SK-N-SH (cell line): ENCODE measurements at regions of chr17 and their contacts with region 1.

Region 1: DNA sequence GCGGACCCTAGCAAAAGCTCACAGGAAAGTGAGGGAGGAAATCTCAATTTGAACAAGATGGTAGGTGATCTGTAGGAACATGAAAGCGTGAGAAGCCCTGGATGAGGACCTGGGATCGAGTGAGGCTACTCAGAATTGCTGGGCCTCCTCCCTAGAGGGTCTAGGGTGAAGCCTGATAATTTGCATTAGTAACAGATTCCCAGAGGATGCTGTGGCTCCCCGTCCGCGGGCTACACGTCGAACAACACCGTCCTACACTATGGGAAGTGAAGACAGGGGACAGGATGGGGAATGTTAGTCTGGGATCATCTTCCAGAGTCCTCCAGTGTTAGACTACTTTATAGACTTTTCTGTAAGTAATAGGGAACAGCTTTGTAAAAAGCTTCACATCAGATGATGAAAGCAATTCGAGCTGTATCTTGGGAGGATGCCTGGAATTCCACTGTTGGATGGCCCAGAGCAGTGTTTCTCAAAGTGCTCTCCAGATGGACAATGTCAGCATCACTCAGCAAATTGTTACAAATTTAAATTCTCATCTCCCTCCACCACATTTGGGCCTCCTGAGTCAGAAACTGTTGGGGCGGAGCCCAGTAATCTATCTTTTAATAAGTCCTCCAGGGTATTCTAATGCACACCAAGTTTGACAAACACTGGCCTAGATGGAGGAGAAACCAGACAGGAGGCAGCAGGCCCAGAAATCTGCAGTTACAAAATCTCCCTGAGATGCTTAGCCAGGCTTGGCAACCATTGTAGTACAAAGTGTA is 6.5 kb downstream of the FNDC8 start:
- DNase-seq: no peak
- H3K4me3 ChIP-seq: no peak overlapping the region
- H3K27ac ChIP-seq: no peak overlapping the region
- H3K4me1 ChIP-seq: no peaks in the 10 kb centered on the region
- H3K27me3 ChIP-seq: no peaks in the 10 kb centered on the region
- CTCF ChIP-seq: no peak
- EP300 ChIP-seq: no peak
- RAD21 ChIP-seq: no peak

Region 2: DNA sequence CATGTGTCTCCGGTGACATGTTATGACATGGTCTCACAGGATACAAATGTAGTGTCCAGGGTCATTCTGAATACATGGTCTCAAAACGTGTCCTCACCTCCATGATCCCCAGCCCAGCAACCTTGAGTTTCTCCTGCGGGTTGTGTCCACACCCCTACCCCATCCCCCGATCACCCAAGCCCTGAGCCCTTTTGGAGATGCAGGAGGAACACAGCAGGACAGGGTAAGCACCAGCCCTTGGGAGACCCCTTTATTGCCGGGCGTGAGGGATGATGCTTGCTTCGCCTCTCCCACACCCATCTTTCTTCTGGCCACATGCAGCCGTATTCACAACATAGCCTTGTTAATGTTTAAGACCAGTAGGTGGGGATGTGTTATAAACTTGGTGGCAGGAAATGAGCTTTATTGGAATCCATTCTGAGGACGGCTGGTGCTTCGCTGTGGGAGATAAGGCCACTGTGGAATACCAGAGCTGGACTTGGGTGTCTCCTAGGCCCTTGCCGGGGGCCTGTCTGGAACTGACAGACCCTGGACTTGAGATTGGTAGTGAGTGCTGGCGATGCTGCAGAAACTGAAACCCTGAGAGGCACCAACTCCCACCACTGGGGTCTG is 543.0 kb before region 1 on chr17:
- CTCF ChIA-PET with region 1: no interaction called
- POLR2A ChIA-PET with region 1: no interaction called
- DNase-seq: peak; percentile 75
- H3K4me3 ChIP-seq: no peak overlapping the region
- H3K27ac ChIP-seq: no peak overlapping the region
- H3K4me1 ChIP-seq: peaks cover 0 to 8% of the 10 kb centered on the region in 2 experiments; a peak in 1 of 4 replicates
- H3K27me3 ChIP-seq: peaks cover 66% of the 10 kb centered on the region
- CTCF ChIP-seq: peak; percentile 22; the same call in 1 of the 2 replicates
- EP300 ChIP-seq: no peak
- RAD21 ChIP-seq: peak; percentile 83

Region 3: GRCh38 chr17:35141681-35142466 is 13.9 kb after region 1 on chr17 and contains the start of gene NLE1:
- CTCF ChIA-PET with region 1: interaction called, 11 read pairs
- POLR2A ChIA-PET with region 1: interaction called, 5 read pairs
- DNase-seq: peak; percentile 94
- H3K4me3 ChIP-seq: peak within 1 kb of the TSS; percentile 91 to 99
- H3K27ac ChIP-seq: peak within 1 kb of the TSS in 1 of 2 experiments; percentile 47; a peak in 1 of 4 replicates
- H3K4me1 ChIP-seq: peaks cover 0 to 3% of the 10 kb centered on the region in 2 experiments; a peak in 1 of 4 replicates
- H3K27me3 ChIP-seq: no peaks in the 10 kb centered on the region; the same call in 1 of the 2 replicates
- CTCF ChIP-seq: peak; percentile 83
- EP300 ChIP-seq: peak; percentile 14 to 24; a peak in 1 of 4 replicates
- RAD21 ChIP-seq: 0 out of 2 replicates have a peak, but pooled peaks have one; percentile 8
- polyA plus RNA-seq, gene NLE1: 22.1 and 25.3 TPM in 2 replicates

Region 4: GRCh38 chr17:35214631-35215273 is 86.8 kb after region 1 on chr17:
- CTCF ChIA-PET with region 1: no interaction called
- POLR2A ChIA-PET with region 1: no interaction called
- DNase-seq: no peak
- H3K4me3 ChIP-seq: no peak overlapping the region
- H3K27ac ChIP-seq: no peak overlapping the region
- H3K4me1 ChIP-seq: no peaks in the 10 kb centered on the region
- H3K27me3 ChIP-seq: peaks cover 30% of the 10 kb centered on the region
- CTCF ChIP-seq: no peak
- EP300 ChIP-seq: no peak
- RAD21 ChIP-seq: no peak